ENCODE measurements at regions of chr3 and their contacts with region 1.

Region 1: DNA sequence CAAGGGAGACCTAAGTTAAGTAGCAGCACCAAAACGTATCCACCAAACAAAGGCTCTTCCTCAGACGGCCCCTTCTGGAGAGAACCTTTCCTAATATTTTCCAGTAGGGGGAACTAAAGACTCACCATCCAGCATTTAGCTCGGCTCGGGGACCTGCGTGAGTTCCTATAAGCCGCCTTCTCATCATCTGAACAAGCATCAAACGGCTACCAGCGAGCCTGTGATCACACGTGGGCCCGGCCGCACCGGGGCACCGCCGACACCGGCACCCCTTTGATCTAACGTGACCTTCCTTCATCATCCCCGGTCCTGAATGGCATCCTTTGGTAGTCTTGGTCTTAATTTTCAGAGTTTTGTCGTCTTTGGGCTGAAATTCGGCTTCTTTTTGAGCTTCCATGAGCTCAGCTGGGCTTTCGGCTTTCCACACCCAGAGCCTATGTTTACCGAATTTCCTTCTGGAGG is 1.4 kb upstream of the ROBO2 start:
- DNase-seq: peak; percentile 59 to 79 (median 64)
- ATAC-seq: peak; percentile 96 to 97
- H3K4me3 ChIP-seq: peak overlapping the region; percentile 60
- H3K27ac ChIP-seq: no peak overlapping the region
- H3K4me1 ChIP-seq: no peaks in the 10 kb centered on the region
- H3K27me3 ChIP-seq: peaks cover 3% of the 10 kb centered on the region

Region 2: DNA sequence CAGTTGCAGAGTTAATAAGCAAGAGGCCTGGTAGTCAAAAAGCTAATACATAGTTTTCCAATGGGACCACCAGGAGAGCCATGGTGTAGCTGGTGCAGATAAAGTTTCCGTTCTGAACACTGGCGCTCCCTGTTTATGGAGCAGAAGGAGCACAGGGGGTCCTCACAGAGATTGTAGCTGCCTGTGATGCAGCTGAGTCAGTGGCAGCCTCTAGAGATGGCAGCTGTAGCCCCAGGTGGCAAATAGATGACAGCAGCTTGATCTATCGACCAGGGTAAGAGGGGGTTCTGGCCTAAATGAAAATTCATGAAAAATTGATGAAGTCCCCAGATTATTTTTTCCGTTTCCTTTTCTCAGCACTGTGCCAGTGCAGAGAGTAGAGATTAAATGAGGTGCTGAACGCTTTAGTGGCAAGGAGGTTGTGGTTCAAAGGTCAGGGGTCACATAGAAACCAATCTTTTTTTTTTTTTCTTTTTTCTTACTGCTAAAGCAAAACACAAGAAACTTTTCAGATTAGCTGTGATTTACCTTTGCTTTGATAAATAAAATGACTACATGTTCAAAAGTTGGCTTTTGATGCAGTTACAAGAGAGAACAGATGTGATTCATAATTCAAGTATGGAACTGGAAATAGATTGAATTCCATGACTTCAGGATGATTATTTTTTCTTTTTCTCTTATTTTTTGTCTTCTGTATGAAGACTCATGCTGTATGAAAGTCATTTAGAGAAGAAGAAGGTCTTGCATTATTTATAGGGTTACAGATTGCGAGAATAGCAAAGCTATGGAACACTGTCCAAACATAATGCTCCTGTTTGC is 64.7 kb after region 1 on chr3:
- intact Hi-C with region 1: no loop called
- DNase-seq: no peak
- ATAC-seq: no peak
- H3K4me3 ChIP-seq: no peak overlapping the region
- H3K27ac ChIP-seq: no peak overlapping the region
- H3K4me1 ChIP-seq: no peaks in the 10 kb centered on the region
- H3K27me3 ChIP-seq: no peaks in the 10 kb centered on the region

Region 3: DNA sequence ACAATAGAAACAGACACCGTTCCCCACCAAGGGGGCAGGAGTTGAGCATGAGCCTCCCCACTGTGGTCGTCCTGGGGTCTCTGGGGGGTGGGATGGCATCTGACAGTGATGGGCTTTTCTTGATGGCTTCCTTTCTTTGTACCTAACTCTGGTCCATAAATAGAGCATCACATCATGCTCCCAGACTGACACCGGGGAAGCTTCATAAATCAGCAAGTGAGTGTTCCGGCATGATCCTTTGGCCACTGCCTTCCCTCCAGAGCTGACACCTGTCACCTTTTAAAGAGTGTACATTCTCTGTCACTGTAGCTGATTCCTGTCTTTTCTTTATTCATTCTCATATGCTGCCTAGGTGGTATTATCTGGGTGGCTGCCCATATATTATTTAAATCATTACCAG is 131.3 kb after region 1 on chr3:
- intact Hi-C with region 1: no loop called
- DNase-seq: no peak
- ATAC-seq: no peak
- H3K4me3 ChIP-seq: no peak overlapping the region
- H3K27ac ChIP-seq: no peak overlapping the region
- H3K4me1 ChIP-seq: no peaks in the 10 kb centered on the region
- H3K27me3 ChIP-seq: no peaks in the 10 kb centered on the region

Region 4: GRCh38 chr3:77254967-77255831 is 216.7 kb after region 1 on chr3:
- intact Hi-C with region 1: loop called (anchors 2 to 5 kb)
- DNase-seq: no peak
- ATAC-seq: peak; percentile 59 to 65
- H3K4me3 ChIP-seq: no peak overlapping the region
- H3K27ac ChIP-seq: no peak overlapping the region
- H3K4me1 ChIP-seq: no peaks in the 10 kb centered on the region
- H3K27me3 ChIP-seq: no peaks in the 10 kb centered on the region

Measured in right cardiac atrium (tissue), 5 donors.